Endothelial cell of umbilical vein (primary cell): ENCODE measurements at regions of chr19 and their contacts with region 1.

Region 1: DNA sequence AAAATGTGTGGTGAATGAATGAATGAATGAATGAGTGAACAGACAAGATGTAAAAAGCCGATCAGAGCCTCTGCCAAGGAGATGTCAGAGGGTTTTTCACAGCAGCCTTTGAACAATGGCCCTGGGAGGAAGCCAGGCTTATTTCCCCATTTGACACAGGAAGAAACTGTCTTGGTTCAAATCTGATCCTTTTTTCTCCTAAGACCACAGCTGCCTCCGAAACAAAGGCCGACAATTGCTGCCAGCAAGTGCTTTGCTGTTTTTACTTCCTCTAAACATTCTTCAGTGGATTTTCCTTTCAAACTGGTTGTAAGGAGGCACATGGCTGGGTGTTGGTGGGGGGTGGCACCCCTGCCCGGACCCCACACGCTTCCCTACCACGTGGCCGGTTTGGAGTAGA is 44.2 kb upstream of the HOMER3 start:
- DNase-seq: peak; percentile 92
- H3K4me3 ChIP-seq: no peak overlapping the region
- H3K27ac ChIP-seq: peak overlapping the region; percentile 30
- H3K4me1 ChIP-seq: peaks cover 16% of the 10 kb centered on the region
- H3K27me3 ChIP-seq: peaks cover 0 to 8% of the 10 kb centered on the region in 2 experiments
- CTCF ChIP-seq: no peak
- POLR2A ChIP-seq: no peak

Region 2: DNA sequence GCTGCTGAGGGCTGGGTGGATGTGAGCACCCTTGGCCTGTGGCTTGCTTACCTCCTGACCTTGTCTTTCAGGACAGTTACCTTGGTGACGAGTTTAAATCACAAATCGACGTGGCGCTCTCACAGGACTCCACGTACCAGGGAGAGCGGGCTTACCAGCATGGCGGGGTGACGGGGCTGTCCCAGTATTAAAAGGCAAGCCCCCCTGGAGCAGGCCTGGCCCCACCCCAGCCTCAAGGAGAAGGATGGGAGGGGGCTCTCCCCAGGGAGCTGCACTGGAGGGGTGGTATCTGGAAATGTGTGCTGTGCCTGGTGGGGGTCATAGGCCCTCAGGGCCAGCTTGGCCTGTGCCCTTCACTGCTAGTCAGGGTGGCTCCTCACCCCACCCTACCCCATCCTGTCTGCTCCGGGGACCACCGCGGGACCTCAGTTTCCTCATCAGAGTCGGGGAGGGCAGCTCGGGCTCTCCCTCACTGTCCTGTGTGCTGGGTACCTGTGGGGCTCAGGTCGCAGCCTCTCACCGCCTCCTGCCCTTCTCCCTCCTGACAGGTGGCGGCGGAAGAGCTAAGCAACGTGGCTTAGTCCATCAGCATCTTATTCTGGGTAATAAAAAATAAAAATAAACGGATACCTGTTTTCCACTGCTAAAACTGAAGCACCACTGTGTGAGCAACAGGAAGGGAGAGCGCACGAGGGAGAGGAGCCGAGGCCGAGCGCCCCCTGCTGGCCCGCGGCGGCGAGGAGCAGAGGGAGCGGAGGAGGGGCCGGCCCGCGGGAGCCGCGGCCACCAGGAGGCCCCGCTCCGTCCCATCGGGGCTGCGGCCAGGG is 119.1 kb before region 1 on chr19:
- CTCF ChIA-PET with region 1: interaction called, 6 read pairs
- POLR2A ChIA-PET with region 1: no interaction called
- dilution Hi-C with region 1: no loop called
- intact Hi-C with region 1: loop called (anchors 5 kb)
- DNase-seq: peak; percentile 60
- H3K4me3 ChIP-seq: no peak overlapping the region
- H3K27ac ChIP-seq: no peak overlapping the region
- H3K4me1 ChIP-seq: no peaks in the 10 kb centered on the region
- H3K27me3 ChIP-seq: peaks cover 5 to 7% of the 10 kb centered on the region in 2 experiments
- CTCF ChIP-seq: peak; percentile 93 to 99
- POLR2A ChIP-seq: no peak

Region 3: DNA sequence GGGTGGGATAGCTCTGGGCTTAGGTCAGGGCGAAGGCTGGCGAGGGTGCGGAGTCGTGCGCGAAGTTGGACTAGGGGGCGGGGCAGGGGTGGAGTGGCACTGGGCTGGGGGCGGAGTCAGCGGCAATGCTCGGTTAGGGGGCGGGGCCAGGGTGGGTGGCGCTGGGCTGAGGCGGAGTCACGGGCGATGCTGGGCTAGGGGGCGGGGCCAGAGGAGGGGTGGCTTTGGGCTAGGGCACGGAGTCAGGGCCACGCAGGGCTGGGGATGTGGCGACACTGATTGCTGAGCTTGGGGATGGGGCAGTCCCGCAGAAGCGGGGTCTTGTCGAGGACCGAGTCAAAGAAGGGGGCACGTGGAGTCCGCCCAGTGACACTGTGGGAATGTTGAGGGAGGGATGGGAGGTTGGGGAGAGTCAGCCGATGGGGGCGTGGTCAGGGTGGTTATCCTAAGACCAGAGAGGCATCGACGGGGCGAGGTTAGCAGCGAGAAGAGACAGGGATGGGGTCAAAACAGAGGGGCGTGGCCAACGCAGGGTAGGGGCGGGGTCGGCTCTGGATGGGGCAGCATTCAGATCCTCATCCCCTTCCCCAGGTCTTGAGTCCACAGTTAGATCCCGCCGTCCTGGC is 52.9 kb before region 1 on chr19:
- CTCF ChIA-PET with region 1: interaction called, 19 read pairs
- POLR2A ChIA-PET with region 1: interaction called, 3 read pairs
- dilution Hi-C with region 1: no loop called
- intact Hi-C with region 1: loop called (anchors 2 kb)
- DNase-seq: peak; percentile 58
- H3K4me3 ChIP-seq: no peak overlapping the region
- H3K27ac ChIP-seq: no peak overlapping the region
- H3K4me1 ChIP-seq: no peaks in the 10 kb centered on the region
- H3K27me3 ChIP-seq: no peaks in the 10 kb centered on the region
- CTCF ChIP-seq: no peak
- POLR2A ChIP-seq: no peak

Region 4: DNA sequence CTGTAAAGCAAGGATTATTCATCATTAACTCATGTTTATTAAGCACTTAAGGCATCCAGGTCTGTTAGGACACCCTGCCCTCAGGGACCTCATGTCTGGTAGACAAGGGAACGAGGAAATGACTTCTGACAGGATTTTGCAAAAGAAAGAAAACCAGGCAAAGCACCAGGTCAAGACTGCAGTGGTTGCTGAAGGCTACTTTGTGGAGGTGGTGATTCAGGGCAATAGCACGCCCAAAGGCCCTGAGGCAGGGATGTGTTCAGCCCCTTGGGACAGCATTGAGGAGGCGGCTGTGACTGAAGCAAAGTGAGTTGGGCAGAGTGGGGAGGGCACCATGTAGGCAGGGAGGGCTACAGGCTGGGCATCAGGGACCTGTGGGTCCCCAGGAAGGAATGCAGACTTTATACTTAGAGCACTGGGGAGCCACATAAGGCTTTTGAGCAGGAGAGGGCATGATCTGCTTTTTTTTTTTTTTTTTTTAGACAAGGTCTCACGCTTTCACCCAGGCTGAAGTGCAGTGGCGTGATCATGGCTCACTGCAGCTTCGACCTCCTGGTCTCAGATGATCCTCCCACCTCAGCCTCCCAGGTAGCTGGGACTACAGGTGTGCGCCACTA is 33.5 kb before region 1 on chr19:
- CTCF ChIA-PET with region 1: interaction called, 10 read pairs
- POLR2A ChIA-PET with region 1: no interaction called
- dilution Hi-C with region 1: no loop called
- intact Hi-C with region 1: no loop called
- DNase-seq: peak; percentile 17
- H3K4me3 ChIP-seq: no peak overlapping the region
- H3K27ac ChIP-seq: no peak overlapping the region
- H3K4me1 ChIP-seq: no peaks in the 10 kb centered on the region
- H3K27me3 ChIP-seq: no peaks in the 10 kb centered on the region
- CTCF ChIP-seq: no peak
- POLR2A ChIP-seq: no peak

Region 5: DNA sequence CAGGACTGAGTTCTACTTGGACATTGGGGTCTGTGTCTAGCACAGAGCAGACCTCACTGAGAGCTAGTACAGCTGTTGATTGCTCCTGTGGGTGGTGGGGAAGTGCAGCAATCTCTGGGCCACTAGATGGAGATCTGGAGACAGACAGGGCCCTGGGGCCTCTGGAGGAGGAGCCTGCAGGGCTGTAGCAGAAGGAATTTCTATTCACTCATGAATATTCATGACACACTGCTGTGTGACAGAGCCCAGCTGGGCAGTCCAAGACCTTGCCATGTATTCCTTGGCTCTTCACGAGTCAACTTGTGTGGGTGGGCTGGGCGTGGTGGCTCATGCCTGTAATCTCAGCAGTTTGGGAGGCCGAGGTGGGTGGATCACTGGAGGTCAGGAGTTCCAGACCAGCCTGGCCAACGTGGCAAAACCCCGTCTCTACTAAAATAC is 10.6 kb after region 1 on chr19:
- CTCF ChIA-PET with region 1: interaction called, 14 read pairs
- POLR2A ChIA-PET with region 1: interaction called, 4 read pairs
- dilution Hi-C with region 1: no loop called
- intact Hi-C with region 1: no loop called
- DNase-seq: peak; percentile 70
- H3K4me3 ChIP-seq: no peak overlapping the region
- H3K27ac ChIP-seq: no peak overlapping the region
- H3K4me1 ChIP-seq: peaks cover 13% of the 10 kb centered on the region
- H3K27me3 ChIP-seq: no peaks in the 10 kb centered on the region
- CTCF ChIP-seq: peak; percentile 47 to 76
- POLR2A ChIP-seq: no peak

Region 6: DNA sequence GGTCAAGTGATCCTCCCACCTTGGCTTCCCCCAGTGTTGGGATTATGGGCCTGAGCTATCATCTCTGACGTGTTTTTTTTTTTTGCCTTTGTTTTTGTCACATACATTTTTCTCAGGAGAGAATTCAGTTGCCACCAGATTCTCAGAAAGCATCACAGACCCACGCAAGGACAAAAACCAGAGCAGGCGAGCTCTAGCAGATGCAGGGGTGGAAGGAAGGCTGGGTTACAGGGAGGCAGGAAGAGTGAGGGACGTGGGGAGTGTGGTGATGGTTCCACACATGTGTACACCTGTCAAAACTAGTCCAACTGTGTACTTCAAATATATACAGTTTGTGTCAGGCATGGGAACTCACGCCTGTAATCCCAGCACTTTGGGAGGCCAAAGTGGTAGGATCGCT is 148.7 kb after region 1 on chr19:
- CTCF ChIA-PET with region 1: no interaction called
- POLR2A ChIA-PET with region 1: no interaction called
- dilution Hi-C with region 1: no loop called
- intact Hi-C with region 1: no loop called
- DNase-seq: no peak
- H3K4me3 ChIP-seq: no peak overlapping the region
- H3K27ac ChIP-seq: no peak overlapping the region
- H3K4me1 ChIP-seq: peaks cover 8% of the 10 kb centered on the region
- H3K27me3 ChIP-seq: no peaks in the 10 kb centered on the region
- CTCF ChIP-seq: no peak
- POLR2A ChIP-seq: no peak